CD4-positive, alpha-beta T cell (primary cell): ENCODE measurements at regions of chr11 and their contacts with region 1.

Region 1: DNA sequence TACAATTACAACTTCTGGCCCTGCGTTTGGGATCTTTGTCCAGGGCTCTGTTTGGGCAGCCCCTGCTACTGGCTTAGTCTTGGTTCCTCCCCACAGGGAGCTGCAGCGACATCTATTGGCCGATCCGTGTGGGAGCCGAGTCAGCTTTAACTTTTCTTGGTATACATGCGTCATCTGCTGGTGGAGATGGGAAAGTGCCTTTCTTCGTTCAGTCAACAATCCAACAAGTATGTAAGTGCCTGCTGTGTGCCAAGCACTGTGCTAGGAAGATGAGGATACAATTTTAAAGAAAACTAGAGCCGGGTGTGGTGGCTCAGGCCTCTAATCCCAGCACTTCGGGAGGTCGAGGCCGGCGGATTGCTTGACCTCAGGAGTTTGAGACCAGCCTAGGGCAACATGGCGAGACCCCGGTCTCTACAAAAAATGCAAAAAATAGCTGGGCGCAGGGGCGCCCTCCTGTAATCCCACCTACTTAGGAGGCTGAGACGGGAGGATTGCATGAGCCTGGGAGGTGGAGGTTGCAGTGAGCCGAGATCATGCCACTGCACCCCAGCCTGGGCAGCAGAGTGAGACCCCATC is 8.2 kb downstream of the TPBGL start:
- DNase-seq: peak; percentile 79 to 93 (median 84)
- ATAC-seq: peak; percentile 98
- H3K4me3 ChIP-seq: no peak overlapping the region
- H3K4me3 Mint-ChIP-seq: no peak overlapping the region
- H3K27ac ChIP-seq: no peak overlapping the region
- H3K27ac Mint-ChIP-seq: no peak overlapping the region
- H3K4me1 ChIP-seq: peaks cover 7% of the 10 kb centered on the region
- H3K4me1 Mint-ChIP-seq: no peaks in the 10 kb centered on the region
- H3K27me3 ChIP-seq: no peaks in the 10 kb centered on the region
- H3K27me3 Mint-ChIP-seq: peaks cover 14% of the 10 kb centered on the region
- CTCF ChIP-seq: peak; percentile 99

Region 2: DNA sequence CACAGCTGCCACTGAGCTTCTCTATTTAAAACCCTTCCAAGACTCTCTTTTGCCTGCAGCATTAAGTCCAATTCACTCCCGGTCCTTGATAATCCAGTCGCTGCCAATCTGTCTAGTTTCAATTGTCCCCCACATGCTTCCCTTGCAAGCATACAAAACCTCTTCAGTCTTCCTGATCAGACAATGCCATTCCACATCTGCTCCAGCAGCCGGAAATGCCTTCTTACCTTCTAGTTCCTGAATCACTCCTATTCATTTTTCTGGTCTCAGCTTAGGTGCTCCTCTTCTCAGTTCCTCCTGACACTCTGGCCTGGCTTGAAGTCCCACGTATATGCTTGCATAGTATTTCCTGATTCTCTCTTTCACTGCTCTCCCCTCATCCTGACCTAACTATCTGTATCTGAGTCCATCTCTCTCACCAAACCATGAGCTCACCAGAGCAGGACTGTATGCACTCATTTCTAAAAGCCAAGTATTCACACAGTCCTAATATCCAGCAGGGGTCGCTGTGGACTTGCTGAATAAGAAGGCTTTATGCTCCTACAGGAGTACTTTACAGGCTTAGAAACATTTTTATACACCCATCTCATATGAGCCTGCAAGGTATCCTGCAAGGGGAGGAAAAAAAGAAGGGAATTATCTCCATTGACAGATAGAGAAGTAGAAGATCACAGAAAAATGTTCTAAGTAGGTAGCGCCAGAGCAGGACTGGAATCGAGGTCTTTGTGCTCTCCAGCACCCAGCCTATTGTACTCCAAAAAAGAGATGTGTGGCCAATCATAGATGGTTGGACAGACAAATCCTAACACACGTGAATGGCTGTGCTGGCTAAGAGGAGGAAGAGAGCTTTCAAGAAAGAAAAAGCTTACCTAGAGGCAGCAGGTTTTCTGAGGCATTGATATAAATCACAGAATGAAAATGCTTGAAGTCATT is 319.1 kb before region 1 on chr11:
- CTCF ChIA-PET with region 1: interaction called, 21 read pairs
- POLR2A ChIA-PET with region 1: no interaction called
- intact Hi-C with region 1: loop called (anchors 1 to 2 kb)
- DNase-seq: peak; percentile 25 to 88 (median 56)
- ATAC-seq: peak; percentile 82
- H3K4me3 ChIP-seq: no peak overlapping the region
- H3K4me3 Mint-ChIP-seq: no peak overlapping the region
- H3K27ac ChIP-seq: no peak overlapping the region
- H3K27ac Mint-ChIP-seq: no peak overlapping the region
- H3K4me1 ChIP-seq: no peaks in the 10 kb centered on the region
- H3K4me1 Mint-ChIP-seq: no peaks in the 10 kb centered on the region
- H3K27me3 ChIP-seq: no peaks in the 10 kb centered on the region
- H3K27me3 Mint-ChIP-seq: no peaks in the 10 kb centered on the region
- CTCF ChIP-seq: peak; percentile 97

Region 3: GRCh38 chr11:75022759-75023396 is 225.9 kb before region 1 on chr11:
- CTCF ChIA-PET with region 1: interaction called, 16 read pairs
- POLR2A ChIA-PET with region 1: no interaction called
- intact Hi-C with region 1: loop called (anchors 1 kb)
- DNase-seq: peak; percentile 59 to 84 (median 70)
- ATAC-seq: peak; percentile 86
- H3K4me3 ChIP-seq: no peak overlapping the region
- H3K4me3 Mint-ChIP-seq: no peak overlapping the region
- H3K27ac ChIP-seq: no peak overlapping the region
- H3K27ac Mint-ChIP-seq: no peak overlapping the region
- H3K4me1 ChIP-seq: no peaks in the 10 kb centered on the region
- H3K4me1 Mint-ChIP-seq: no peaks in the 10 kb centered on the region
- H3K27me3 ChIP-seq: no peaks in the 10 kb centered on the region
- H3K27me3 Mint-ChIP-seq: no peaks in the 10 kb centered on the region
- CTCF ChIP-seq: peak; percentile 96

Region 4: DNA sequence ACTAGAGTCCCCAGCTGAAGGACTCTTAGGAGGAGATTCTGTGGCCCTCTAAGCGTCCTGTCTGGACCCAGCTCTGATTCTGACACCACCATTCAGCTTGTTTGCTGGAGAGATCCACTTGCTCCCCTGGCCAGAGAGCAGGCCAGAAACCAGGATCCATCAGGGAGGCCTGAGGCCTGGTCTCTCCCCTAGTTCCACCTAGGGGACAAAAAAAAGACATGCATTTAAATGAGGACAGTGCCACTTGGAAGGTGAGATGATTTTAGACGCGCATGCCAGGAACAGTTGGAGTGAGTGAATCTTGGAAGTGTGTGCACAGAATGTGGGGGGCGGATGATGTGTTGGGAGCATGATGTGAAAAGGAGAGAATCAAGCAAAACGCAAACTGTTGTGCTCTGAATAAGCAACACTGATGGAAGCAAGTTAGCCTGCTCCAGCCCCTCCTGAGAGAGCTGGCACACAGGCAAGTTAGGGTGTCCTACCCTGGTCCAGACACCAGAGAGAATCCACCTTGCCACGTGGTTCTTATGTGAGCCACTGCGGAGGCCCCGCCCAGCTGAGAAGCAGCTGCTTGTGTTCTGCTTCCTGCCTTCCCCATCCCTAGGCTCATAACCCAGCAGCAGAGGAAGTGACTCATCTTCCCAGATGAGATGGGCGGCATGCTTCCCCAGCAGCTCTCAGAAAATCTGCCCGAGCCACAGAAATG is 105.9 kb before region 1 on chr11:
- CTCF ChIA-PET with region 1: interaction called, 156 read pairs
- POLR2A ChIA-PET with region 1: interaction called, 16 read pairs
- intact Hi-C with region 1: loop called (anchors 1 kb)
- DNase-seq: peak; percentile 20 to 88 (median 70)
- ATAC-seq: peak; percentile 94
- H3K4me3 ChIP-seq: no peak overlapping the region
- H3K4me3 Mint-ChIP-seq: no peak overlapping the region
- H3K27ac ChIP-seq: peak overlapping the region; percentile 37 to 55
- H3K27ac Mint-ChIP-seq: peak overlapping the region; percentile 18
- H3K4me1 ChIP-seq: peaks cover 34% of the 10 kb centered on the region
- H3K4me1 Mint-ChIP-seq: peaks cover 43% of the 10 kb centered on the region
- H3K27me3 ChIP-seq: no peaks in the 10 kb centered on the region
- H3K27me3 Mint-ChIP-seq: no peaks in the 10 kb centered on the region
- CTCF ChIP-seq: no peak

Region 5: GRCh38 chr11:75195121-75195551 is 53.6 kb before region 1 on chr11:
- CTCF ChIA-PET with region 1: no interaction called
- POLR2A ChIA-PET with region 1: no interaction called
- intact Hi-C with region 1: no loop called
- DNase-seq: no peak
- ATAC-seq: no peak
- H3K4me3 ChIP-seq: no peak overlapping the region
- H3K4me3 Mint-ChIP-seq: no peak overlapping the region
- H3K27ac ChIP-seq: no peak overlapping the region
- H3K27ac Mint-ChIP-seq: no peak overlapping the region
- H3K4me1 ChIP-seq: no peaks in the 10 kb centered on the region
- H3K4me1 Mint-ChIP-seq: no peaks in the 10 kb centered on the region
- H3K27me3 ChIP-seq: peaks cover 0 to 2% of the 10 kb centered on the region in 2 experiments
- H3K27me3 Mint-ChIP-seq: no peaks in the 10 kb centered on the region
- CTCF ChIP-seq: no peak

Region 6: DNA sequence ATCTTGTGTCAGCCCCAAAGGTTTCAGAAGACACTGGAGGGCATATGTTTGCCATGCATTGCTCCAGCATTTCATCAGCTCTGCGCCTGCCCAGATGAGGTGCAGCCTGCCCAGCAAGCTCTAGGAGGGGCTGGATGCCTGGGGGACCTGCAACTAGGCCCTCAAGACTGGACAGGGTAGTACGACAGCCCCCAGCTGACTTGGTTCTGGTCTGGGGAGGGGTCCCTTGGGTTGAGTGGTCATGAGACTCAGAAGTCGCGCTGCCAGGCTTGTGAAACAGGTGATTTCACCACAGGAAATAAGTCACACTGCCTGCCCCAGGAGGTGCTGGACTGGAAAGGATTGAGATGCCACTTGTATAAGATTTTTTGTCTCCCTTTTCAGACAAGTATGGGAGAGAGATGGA is 15.2 kb after region 1 on chr11:
- CTCF ChIA-PET with region 1: interaction called, 21 read pairs
- POLR2A ChIA-PET with region 1: interaction called, 7 read pairs
- intact Hi-C with region 1: no loop called
- DNase-seq: peak in 4 of 14 experiments; percentile 29 to 46 (median 41)
- ATAC-seq: peak; percentile 21
- H3K4me3 ChIP-seq: no peak overlapping the region
- H3K4me3 Mint-ChIP-seq: no peak overlapping the region
- H3K27ac ChIP-seq: peak overlapping the region in 1 of 2 donors; percentile 22
- H3K27ac Mint-ChIP-seq: peak overlapping the region; percentile 67
- H3K4me1 ChIP-seq: peaks cover 56% of the 10 kb centered on the region
- H3K4me1 Mint-ChIP-seq: peaks cover 48% of the 10 kb centered on the region
- H3K27me3 ChIP-seq: no peaks in the 10 kb centered on the region
- H3K27me3 Mint-ChIP-seq: no peaks in the 10 kb centered on the region
- CTCF ChIP-seq: no peak

Region 7: DNA sequence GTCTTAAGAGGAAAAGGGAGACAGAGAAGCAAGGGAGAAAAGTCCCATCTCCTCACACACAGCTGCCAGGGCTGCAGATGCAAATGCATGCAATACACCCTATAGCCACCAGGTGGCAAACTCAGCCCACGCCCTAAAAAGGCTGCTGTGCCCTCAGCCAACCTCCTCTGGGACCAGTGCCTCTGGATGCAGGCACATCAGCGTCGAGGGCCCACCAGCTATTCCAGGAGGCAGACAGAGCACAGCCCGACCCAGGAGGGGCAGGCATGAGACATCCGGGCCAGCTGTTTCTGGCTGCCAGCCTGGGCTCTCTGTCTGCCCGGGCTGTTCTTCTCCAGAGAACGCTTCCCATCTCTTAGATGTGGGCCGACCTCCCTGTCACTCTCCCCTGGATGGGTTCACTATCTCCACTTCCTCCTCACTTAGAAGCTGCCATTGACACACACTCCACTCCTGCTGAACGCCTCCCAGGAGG is 31.5 kb after region 1 on chr11:
- CTCF ChIA-PET with region 1: interaction called, 40 read pairs
- POLR2A ChIA-PET with region 1: interaction called, 9 read pairs
- intact Hi-C with region 1: no loop called
- DNase-seq: peak; percentile 62 to 87 (median 74)
- ATAC-seq: peak; percentile 51
- H3K4me3 ChIP-seq: no peak overlapping the region
- H3K4me3 Mint-ChIP-seq: peak overlapping the region; percentile 62
- H3K27ac ChIP-seq: no peak overlapping the region
- H3K27ac Mint-ChIP-seq: peak overlapping the region; percentile 87
- H3K4me1 ChIP-seq: peaks cover 50% of the 10 kb centered on the region
- H3K4me1 Mint-ChIP-seq: peaks cover 51% of the 10 kb centered on the region
- H3K27me3 ChIP-seq: no peaks in the 10 kb centered on the region
- H3K27me3 Mint-ChIP-seq: no peaks in the 10 kb centered on the region
- CTCF ChIP-seq: peak; percentile 95